ENCODE measurements at regions of chr9 and their contacts with region 1.

Region 1: GRCh38 chr9:94002316-94003140 is 47.4 kb upstream of the BARX1 start:
- DNase-seq: no peak
- H3K4me3 ChIP-seq: no peak overlapping the region
- CTCF ChIP-seq: peak; percentile 68

Region 2: GRCh38 chr9:93682232-93682968 is 320.1 kb before region 1 on chr9:
- CTCF ChIA-PET with region 1: interaction called, 57 read pairs
- POLR2A ChIA-PET with region 1: no interaction called
- DNase-seq: no peak
- H3K4me3 ChIP-seq: no peak overlapping the region
- CTCF ChIP-seq: peak; percentile 81

Region 3: GRCh38 chr9:94026816-94027215 is 24.3 kb after region 1 on chr9:
- CTCF ChIA-PET with region 1: no interaction called
- POLR2A ChIA-PET with region 1: no interaction called
- DNase-seq: no peak
- H3K4me3 ChIP-seq: no peak overlapping the region
- CTCF ChIP-seq: no peak